Mucosa of descending colon (tissue), 3 donors: ENCODE measurements at regions of chr15 and their contacts with region 1.

Region 1: DNA sequence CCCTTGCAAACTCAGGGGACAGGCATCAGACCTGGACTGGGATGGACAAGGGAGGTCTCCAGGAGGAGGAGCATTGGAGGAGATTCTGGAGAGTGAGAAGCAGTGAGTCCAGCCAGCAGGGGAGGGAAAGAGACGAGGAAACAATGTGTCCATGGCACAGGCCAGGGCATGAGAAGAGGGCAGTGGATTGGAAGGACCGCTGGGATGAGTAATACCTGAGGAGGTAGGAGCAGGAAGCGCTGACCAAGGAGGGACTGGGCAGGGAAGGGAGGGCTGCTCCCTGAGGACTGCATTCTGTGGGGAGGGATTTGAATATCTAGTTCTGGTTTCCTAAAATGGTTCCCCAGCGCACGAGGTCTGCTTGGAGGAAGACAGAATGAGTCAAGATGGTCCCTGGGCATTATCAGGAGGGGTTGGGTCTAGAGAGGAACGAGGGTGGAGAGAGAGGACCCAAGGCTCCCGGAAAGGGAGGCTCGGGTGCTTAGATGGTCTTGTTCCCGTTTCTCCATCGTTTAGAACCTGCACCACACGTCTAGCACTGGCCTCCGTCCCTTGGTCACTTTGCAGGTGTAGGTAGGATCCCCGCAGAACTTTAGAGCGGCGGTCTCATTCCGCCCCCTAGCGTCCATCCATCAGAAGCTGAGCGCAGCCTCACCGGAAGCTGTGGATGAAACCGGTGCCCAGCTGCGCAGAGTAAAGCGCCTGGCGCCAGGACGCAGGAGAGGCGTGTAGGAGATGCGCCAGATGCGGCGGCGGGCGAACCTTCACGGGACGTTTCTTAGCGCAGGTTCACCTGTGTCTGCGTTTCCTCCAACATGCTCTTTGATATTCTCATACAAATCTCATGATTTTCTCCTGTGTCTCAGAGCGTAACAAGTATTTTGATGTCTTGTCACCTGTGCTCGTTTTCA is 190.7 kb upstream of the NDN start:
- DNase-seq: peak in 2 of 3 donors; percentile 65 to 75
- ATAC-seq: peak; percentile 94
- H3K4me3 ChIP-seq: no peak overlapping the region
- H3K4me1 ChIP-seq: no peaks in the 10 kb centered on the region
- CTCF ChIP-seq: peak; percentile 51

Region 2: DNA sequence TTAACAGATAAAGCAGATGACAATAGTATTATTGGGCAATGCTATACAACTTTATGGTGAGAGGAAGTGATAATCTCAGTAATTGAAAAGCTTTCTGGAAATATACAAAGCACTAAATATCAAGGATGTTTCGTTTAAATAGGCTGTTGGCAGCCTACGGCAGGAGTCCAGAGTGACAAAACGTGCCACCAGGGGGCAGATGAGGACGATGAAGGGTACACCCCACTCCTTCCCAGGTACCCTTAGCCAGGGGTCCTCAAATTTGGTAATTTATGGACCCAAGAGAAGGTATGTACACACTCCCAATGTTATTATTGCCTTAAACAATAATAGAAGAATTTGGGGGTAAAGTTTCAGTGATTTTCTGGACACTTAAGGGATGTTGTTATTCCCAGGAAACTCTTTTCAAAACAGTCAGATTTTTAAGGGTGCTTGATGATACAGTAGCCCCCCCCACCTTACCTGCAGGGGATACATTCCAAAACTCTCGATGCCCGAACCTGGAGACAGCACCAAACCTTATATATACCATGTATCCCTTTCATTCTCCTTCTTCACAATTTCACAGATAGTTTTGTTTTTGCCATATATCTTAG is 228.7 kb before region 1 on chr15:
- intact Hi-C with region 1: loop called in 1 of 2 experiments (anchors 5 kb)
- DNase-seq: peak in 2 of 3 donors; percentile 48 to 59
- ATAC-seq: no peak
- H3K4me3 ChIP-seq: no peak overlapping the region
- H3K4me1 ChIP-seq: no peaks in the 10 kb centered on the region
- CTCF ChIP-seq: no peak

Region 3: GRCh38 chr15:24067733-24068501 is 190.2 kb after region 1 on chr15:
- intact Hi-C with region 1: no loop called
- DNase-seq: peak; percentile 50 to 71 (median 57)
- ATAC-seq: peak; percentile 80
- H3K4me3 ChIP-seq: no peak overlapping the region
- H3K4me1 ChIP-seq: peaks cover 5% of the 10 kb centered on the region
- CTCF ChIP-seq: no peak